ENCODE measurements at regions of chr5 and their contacts with region 1.

Region 1: GRCh38 chr5:175657593-175658271 is at the start of gene HRH2:
- DNase-seq: peak; percentile 56 to 72 (median 70)
- ATAC-seq: peak; percentile 43 to 83 (median 71)
- H3K4me3 ChIP-seq: peak within 1 kb of the TSS; percentile 57 to 93 (median 74)
- H3K27ac ChIP-seq: peak within 1 kb of the TSS in 11 of 12 donors; percentile 66 to 91 (median 85)
- H3K4me1 ChIP-seq: peaks cover 0 to 51% (median 8%) of the 10 kb centered on the region in 12 donors
- H3K27me3 ChIP-seq: peaks cover 0 to 6% (median 0%) of the 10 kb centered on the region in 9 donors
- CTCF ChIP-seq: no peak
- POLR2A ChIP-seq: no peak
- total RNA-seq, gene HRH2: 26.0 to 66.0 (median 37.7) TPM

Region 2: GRCh38 chr5:175534070-175534932 is 123.4 kb before region 1 on chr5:
- intact Hi-C with region 1: loop called in 1 of 10 experiments (anchors 1 kb)
- DNase-seq: peak; percentile 77 to 92 (median 84)
- ATAC-seq: peak; percentile 84 to 98 (median 98)
- H3K4me3 ChIP-seq: peak overlapping the region in 2 of 12 donors; percentile 7 to 32
- H3K27ac ChIP-seq: no peak overlapping the region
- H3K4me1 ChIP-seq: peaks cover 0 to 9% (median 0%) of the 10 kb centered on the region in 12 donors
- H3K27me3 ChIP-seq: no peaks in the 10 kb centered on the region
- CTCF ChIP-seq: peak in 11 of 12 donors; percentile 84 to 99 (median 95)
- POLR2A ChIP-seq: no peak

Region 3: DNA sequence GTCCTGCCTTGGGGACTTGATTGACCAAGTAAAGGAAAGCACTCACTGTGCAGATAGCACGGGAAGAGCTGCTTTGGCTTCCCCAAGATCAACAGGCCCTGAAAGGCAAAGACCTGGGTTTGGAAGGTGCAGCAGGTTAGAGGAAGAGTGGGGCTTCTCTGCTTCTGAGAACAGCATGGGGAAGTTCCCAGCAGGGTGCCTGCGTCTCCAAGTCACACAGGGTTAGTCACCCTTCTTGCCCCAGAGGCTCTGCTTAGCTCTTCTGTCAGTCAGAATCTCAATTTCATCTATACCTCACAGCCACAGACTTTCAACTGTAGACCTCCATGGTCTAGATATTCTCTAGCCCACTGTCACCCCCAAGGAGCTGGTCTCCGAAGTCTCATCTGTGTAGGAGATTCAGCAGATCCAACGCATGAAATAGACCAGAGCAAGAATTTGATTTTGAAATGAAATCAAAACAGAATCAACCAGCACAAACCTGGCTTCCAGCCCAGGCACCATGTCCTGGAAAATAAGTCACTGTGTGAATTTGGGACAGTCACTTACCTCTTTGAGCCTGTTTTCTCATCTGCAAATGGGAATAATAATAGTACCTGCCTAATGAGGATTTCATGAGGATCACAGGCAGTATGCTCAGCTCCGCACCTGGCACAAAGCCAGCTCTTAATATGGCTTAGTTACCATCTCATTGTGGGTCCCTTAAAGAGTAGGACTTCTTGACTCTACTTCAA is 115.3 kb before region 1 on chr5:
- intact Hi-C with region 1: loop called in 1 of 10 experiments (anchors 10 kb)
- DNase-seq: no peak
- ATAC-seq: no peak
- H3K4me3 ChIP-seq: no peak overlapping the region
- H3K27ac ChIP-seq: no peak overlapping the region
- H3K4me1 ChIP-seq: peaks cover 0 to 8% (median 0%) of the 10 kb centered on the region in 12 donors
- H3K27me3 ChIP-seq: peaks cover 0 to 8% (median 0%) of the 10 kb centered on the region in 9 donors
- CTCF ChIP-seq: no peak
- POLR2A ChIP-seq: no peak

Region 4: GRCh38 chr5:175603987-175604739 is 53.6 kb before region 1 on chr5:
- intact Hi-C with region 1: loop called in 1 of 10 experiments (anchors 5 kb)
- DNase-seq: peak in 4 of 5 donors; percentile 21 to 45 (median 32)
- ATAC-seq: peak; percentile 53 to 86 (median 77)
- H3K4me3 ChIP-seq: no peak overlapping the region
- H3K27ac ChIP-seq: peak overlapping the region in 9 of 12 donors; percentile 1 to 71 (median 61)
- H3K4me1 ChIP-seq: peaks cover 0 to 20% (median 0%) of the 10 kb centered on the region in 12 donors
- H3K27me3 ChIP-seq: no peaks in the 10 kb centered on the region
- CTCF ChIP-seq: no peak
- POLR2A ChIP-seq: no peak

Region 5: GRCh38 chr5:175614223-175614815 is 43.4 kb before region 1 on chr5:
- intact Hi-C with region 1: loop called in 1 of 10 experiments (anchors 5 kb)
- DNase-seq: no peak
- ATAC-seq: peak in 1 of 4 donors; percentile 48
- H3K4me3 ChIP-seq: no peak overlapping the region
- H3K27ac ChIP-seq: peak overlapping the region in 2 of 12 donors; percentile 1 to 5
- H3K4me1 ChIP-seq: peaks cover 0 to 17% (median 0%) of the 10 kb centered on the region in 12 donors
- H3K27me3 ChIP-seq: no peaks in the 10 kb centered on the region
- CTCF ChIP-seq: no peak
- POLR2A ChIP-seq: no peak

Region 6: GRCh38 chr5:175718401-175719108 is 60.8 kb after region 1 on chr5:
- intact Hi-C with region 1: loop called in 3 of 10 experiments (anchors 2 to 10 kb)
- DNase-seq: peak in 3 of 5 donors; percentile 49 to 62 (median 60)
- ATAC-seq: peak in 3 of 4 donors; percentile 35 to 66 (median 35)
- H3K4me3 ChIP-seq: no peak overlapping the region
- H3K27ac ChIP-seq: no peak overlapping the region
- H3K4me1 ChIP-seq: peaks cover 0 to 21% (median 0%) of the 10 kb centered on the region in 12 donors
- H3K27me3 ChIP-seq: no peaks in the 10 kb centered on the region
- CTCF ChIP-seq: peak; percentile 61 to 85 (median 74)
- POLR2A ChIP-seq: no peak